ENCODE measurements at regions of chr12 and their contacts with region 1.

Region 1: DNA sequence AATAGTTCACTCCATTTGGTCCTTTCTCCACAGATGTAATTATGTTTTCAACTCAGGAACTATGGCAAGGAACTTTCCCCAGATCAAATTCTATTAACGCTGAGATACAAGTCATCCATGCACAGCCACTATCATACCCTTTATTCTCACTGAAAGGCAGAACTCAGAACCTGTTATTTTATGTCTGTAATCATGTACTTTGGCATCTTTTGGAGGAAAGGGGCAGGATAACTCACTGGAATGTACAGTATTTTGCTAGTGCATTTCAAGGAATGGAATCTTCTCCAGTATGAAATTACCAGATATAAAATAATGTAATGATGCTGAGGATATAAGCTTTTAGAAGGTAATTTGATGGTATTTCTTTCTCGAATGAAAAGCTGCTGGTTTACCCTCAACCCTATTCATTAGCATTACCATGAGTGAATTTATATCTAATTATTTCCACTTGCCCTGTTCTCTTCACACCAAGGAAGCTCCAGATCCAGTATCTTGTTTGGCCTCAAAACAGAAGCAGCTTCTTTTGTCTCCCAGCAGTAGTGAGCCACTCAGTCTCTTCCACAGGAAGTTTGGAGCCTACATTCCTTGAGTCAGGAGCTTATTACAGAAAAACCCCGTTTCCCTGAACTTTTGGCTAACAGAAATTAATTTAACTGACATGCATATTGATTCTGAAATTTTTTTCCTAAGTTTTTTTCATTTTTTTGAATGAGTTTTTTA is 10.0 kb upstream of the AMHR2 start:
- DNase-seq: peak; percentile 0
- H3K4me3 ChIP-seq: no peak overlapping the region
- H3K27ac ChIP-seq: peak overlapping the region; percentile 48 to 79 (median 74)
- H3K4me1 ChIP-seq: peaks cover 0 to 59% (median 48%) of the 10 kb centered on the region in 4 donors
- H3K27me3 ChIP-seq: no peaks in the 10 kb centered on the region
- CTCF ChIP-seq: no peak
- EP300 ChIP-seq: no peak
- POLR2A ChIP-seq: no peak

Region 2: GRCh38 chr12:53389702-53390101 is 23.9 kb before region 1 on chr12:
- intact Hi-C with region 1: loop called (anchors 2 kb)
- DNase-seq: peak; percentile 62
- H3K4me3 ChIP-seq: peak overlapping the region in 2 of 4 donors; percentile 7 to 23
- H3K27ac ChIP-seq: peak overlapping the region; percentile 75 to 91 (median 82)
- H3K4me1 ChIP-seq: peaks cover 0 to 77% (median 72%) of the 10 kb centered on the region in 4 donors
- H3K27me3 ChIP-seq: no peaks in the 10 kb centered on the region
- CTCF ChIP-seq: no peak
- EP300 ChIP-seq: peak in 1 of 4 donors; percentile 50
- POLR2A ChIP-seq: no peak

Region 3: DNA sequence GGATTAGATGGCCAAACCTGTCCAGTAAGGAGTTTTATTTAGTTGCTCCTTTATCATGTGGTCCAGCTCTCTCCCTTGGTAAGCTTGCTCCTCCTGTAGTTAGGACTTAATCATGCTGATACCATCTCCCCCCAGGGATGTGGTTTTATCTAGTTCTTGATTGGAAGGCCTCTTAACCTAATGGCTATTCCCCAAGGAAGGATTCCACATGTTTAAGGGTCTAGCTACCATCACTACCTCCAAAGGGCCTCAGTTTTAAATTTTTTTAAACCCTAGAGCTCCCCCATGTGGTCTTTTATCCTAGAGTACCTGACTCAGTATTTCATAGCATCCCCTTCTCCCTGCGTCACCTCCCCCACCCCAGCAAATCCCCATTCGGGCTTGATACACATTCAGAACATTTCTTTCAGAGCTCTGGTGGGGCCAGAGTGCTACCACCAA is 63.1 kb after region 1 on chr12:
- intact Hi-C with region 1: no loop called
- DNase-seq: no peak
- H3K4me3 ChIP-seq: no peak overlapping the region
- H3K27ac ChIP-seq: peak overlapping the region in 3 of 4 donors; percentile 6 to 29 (median 27)
- H3K4me1 ChIP-seq: peaks cover 0 to 43% (median 20%) of the 10 kb centered on the region in 4 donors
- H3K27me3 ChIP-seq: no peaks in the 10 kb centered on the region
- CTCF ChIP-seq: no peak
- EP300 ChIP-seq: no peak
- POLR2A ChIP-seq: no peak

Measured in sigmoid colon (tissue), 7 donors.